Dendritic cell treated with granulocyte-macrophage colony-stimulating factor and Interleukin-4, amounts not matched to agents 40 ng/mL and 50 ng/mL, for 4 days (primary cell): ENCODE measurements at regions of chr7 and their contacts with region 1.

Region 1: DNA sequence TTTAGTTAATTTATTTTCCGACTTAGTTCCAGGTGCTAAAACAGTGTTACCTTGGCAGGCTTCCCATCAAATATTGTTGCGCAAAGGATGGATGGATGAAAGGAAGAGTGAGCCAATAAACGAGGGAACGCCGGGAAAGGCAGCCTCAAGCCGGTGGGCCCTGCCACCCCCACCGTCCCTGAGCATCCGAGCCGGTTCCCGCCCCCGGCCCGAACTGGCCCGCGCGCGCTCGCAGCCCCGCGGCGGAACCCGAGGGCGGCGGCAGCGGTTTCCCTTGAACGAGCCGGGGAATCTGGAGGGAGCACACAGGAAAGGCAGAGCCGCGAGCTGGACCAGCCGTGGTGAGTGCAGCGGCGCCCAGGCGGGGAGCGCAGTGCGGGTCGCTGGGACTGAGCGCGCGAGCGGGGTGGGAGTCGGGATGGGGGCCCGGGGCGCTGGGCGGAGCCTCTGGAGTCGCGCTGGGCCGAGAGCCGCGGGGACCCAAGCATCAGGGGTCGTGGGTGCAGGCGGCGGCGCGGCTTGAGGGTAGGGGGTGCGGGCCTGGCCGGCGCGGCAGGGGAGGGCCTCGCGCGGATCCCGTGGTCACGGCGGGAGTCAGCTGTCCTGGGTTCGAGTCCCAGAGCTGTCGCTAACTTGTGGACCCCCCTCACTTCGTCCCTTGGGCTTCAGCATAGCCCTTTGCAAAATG is at the start of gene AGK:
- H3K4me3 Mint-ChIP-seq: peak within 1 kb of the TSS; percentile 83
- H3K27ac Mint-ChIP-seq: peak within 1 kb of the TSS; percentile 84
- H3K4me1 Mint-ChIP-seq: peaks cover 14% of the 10 kb centered on the region
- H3K27me3 Mint-ChIP-seq: no peaks in the 10 kb centered on the region

Region 2: DNA sequence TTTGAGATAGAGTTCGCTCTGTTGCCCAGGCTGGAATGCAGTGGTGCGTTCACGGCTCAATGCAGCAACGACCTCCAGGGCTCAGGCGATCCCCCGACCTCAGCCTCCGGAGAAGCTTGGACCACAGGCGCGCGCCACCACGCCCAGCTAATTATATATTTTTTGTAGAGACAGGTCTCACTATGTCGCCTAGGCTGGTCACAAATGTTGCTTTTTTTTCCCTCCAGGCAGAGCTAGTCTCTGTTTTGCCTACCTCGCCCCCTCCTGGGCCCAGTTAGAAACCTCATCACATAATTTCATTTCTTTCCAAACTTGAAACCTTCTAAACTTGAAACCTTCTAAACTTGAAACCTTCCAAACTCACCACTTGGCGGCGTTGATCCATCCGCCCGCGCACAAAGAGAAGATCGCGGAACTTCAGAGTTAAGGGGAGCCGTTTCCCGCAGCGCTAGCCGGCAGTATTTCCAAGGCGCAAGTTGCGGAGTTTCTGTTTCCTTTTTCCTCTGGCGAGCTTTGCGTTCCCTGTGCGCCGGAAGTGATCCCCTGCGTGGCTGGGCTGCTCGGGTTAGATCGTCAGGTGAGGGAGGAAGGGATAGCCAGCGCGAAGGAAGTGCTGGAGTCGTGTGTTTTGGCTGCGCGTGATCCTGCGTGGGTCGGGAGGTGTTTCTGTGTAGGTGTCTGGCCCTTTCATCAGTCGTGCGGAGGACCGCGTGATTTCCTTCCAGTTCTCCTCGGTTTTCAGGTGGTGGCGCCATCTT is 186.8 kb after region 1 on chr7 and contains the start of gene SSBP1:
- intact Hi-C with region 1: loop called (anchors 10 kb)
- H3K4me3 Mint-ChIP-seq: peak within 1 kb of the TSS; percentile 98
- H3K27ac Mint-ChIP-seq: peak within 1 kb of the TSS; percentile 97
- H3K4me1 Mint-ChIP-seq: peaks cover 29% of the 10 kb centered on the region
- H3K27me3 Mint-ChIP-seq: no peaks in the 10 kb centered on the region